Dorsolateral prefrontal cortex (tissue), 120 donors: ENCODE measurements at regions of chr9 and their contacts with region 1.

Region 1: GRCh38 chr9:19048966-19049916 is at the start of gene RRAGA:
- DNase-seq: peak; percentile 89 to 96 (median 94)
- H3K4me3 ChIP-seq: peak within 1 kb of the TSS; percentile 61 to 99 (median 90)
- H3K27ac ChIP-seq: peak within 1 kb of the TSS; percentile 83 to 100 (median 97)
- H3K27me3 ChIP-seq: no peaks in the 10 kb centered on the region
- CTCF ChIP-seq: peak; percentile 66 to 96 (median 88)
- total RNA-seq, gene RRAGA: 71.2 to 162 (median 128) TPM

Region 2: DNA sequence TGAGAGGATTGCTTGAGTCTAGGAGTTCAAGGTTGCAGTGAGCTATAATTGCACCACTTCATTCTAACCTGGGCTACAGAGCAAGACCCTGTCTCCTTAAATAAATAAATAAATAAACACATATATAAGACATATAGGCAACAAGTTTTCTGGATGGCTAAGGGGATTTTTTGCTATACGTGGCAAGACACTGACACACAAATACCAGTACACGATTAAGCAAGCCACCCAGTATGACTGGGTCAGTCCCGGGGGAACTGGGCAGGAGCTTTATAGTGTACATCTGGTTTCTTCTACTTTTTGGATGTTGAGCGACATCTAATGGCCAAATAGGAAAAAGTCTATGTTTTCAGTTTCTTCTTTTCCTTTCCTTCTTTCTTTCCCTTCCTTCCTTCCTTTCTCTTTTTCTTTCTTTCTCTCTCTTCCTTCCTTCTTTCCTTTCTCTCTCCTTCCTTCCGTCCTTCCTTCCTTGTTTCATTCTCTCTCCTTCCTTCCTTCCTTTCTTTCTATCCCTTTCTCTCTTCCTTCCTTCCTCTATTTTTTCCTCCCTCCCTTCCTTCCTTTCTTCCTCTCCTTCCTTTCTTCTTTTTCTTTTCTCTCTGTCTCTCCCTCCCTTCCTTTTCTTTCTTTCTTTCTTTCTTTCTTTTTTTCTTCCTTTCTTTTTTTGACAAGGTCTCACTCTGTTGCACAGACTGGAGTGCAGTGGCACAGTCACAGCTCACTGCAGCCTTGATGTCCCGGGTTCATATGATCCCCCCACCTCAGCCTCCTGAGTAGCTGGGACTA is 125.1 kb after region 1 on chr9:
- intact Hi-C with region 1: loop called (anchors 1 to 5 kb)
- DNase-seq: peak in 1 of 10 donors; percentile 18
- H3K4me3 ChIP-seq: peak overlapping the region in 15 of 59 donors; percentile 5 to 32 (median 18)
- H3K27ac ChIP-seq: no peak overlapping the region
- H3K27me3 ChIP-seq: no peaks in the 10 kb centered on the region
- CTCF ChIP-seq: peak in 54 of 56 donors; percentile 23 to 83 (median 62)

Region 3: DNA sequence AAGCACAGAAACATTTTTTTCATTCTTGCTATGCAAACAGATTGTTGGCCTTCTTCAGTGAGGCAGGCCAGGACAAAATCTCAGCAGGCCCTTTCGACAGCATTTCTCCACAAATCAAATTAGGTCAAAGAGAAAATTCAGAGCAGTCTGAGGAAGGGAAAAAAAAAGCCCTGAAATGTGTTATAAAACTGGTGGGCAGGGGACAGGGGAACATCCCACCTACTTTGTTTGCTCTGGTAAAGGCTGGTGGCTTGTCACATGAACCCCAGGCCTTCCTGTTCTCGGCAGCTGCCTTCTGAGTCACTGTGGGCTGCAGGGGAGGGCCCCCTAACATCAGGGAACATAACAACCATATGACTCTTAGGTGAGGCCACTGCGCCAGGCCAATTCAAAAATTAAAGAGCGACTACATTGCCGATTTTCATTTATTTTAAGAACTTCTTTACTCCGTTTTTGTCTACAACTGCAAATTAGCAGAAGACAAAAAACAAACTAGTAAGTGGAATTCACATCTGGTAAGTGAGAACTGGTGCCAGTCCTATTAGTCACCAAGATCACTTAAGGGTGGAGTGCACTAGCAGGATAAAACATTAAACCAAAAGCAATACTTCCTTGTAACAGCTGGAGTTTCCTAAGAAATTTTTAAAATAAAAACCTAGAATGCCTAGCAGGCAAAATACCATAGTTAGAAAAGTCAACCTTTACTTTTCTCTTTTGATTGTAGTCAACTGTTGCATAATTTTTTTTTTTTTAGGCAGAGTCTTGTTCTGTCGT is 135.1 kb after region 1 on chr9:
- intact Hi-C with region 1: no loop called
- DNase-seq: peak in 7 of 10 donors; percentile 32 to 63 (median 43)
- H3K4me3 ChIP-seq: no peak overlapping the region
- H3K27ac ChIP-seq: peak overlapping the region in 57 of 59 donors; percentile 38 to 89 (median 74)
- H3K27me3 ChIP-seq: no peaks in the 10 kb centered on the region
- CTCF ChIP-seq: no peak

Region 4: GRCh38 chr9:19230356-19231125 is 181.3 kb after region 1 on chr9 and contains the start of gene DENND4C:
- intact Hi-C with region 1: loop called (anchors 1 to 5 kb)
- DNase-seq: peak; percentile 65 to 90 (median 79)
- H3K4me3 ChIP-seq: peak within 1 kb of the TSS; percentile 58 to 100 (median 98)
- H3K27ac ChIP-seq: peak within 1 kb of the TSS; percentile 83 to 100 (median 97)
- H3K27me3 ChIP-seq: no peaks in the 10 kb centered on the region
- CTCF ChIP-seq: peak in 35 of 56 donors; percentile 5 to 66 (median 34)
- total RNA-seq, gene DENND4C: 25.3 to 66.1 (median 39.0) TPM

Region 5: GRCh38 chr9:19379697-19380046 is 330.4 kb after region 1 on chr9:
- intact Hi-C with region 1: loop called (anchors 1 to 5 kb)
- DNase-seq: peak in 3 of 10 donors; percentile 25 to 53 (median 32)
- H3K4me3 ChIP-seq: peak overlapping the region; percentile 58 to 95 (median 85)
- H3K27ac ChIP-seq: peak overlapping the region; percentile 60 to 98 (median 93)
- H3K27me3 ChIP-seq: no peaks in the 10 kb centered on the region
- CTCF ChIP-seq: no peak